ENCODE measurements at regions of chr17 and their contacts with region 1.

Region 1: GRCh38 chr17:81322271-81323082 is 27.4 kb upstream of the SLC38A10 start:
- DNase-seq: peak; percentile 72 to 89
- ATAC-seq: peak; percentile 46 to 83; a peak in 5 of 6 replicates
- H3K4me3 ChIP-seq: no peak overlapping the region
- H3K27ac ChIP-seq: no peak overlapping the region
- H3K4me1 ChIP-seq: no peaks in the 10 kb centered on the region
- CTCF ChIP-seq: peak; percentile 30
- EP300 ChIP-seq: no peak
- POLR2A ChIP-seq: no peak
- RAD21 ChIP-seq: peak in 1 of 2 experiments; percentile 29; a peak in 2 of 5 replicates

Region 2: DNA sequence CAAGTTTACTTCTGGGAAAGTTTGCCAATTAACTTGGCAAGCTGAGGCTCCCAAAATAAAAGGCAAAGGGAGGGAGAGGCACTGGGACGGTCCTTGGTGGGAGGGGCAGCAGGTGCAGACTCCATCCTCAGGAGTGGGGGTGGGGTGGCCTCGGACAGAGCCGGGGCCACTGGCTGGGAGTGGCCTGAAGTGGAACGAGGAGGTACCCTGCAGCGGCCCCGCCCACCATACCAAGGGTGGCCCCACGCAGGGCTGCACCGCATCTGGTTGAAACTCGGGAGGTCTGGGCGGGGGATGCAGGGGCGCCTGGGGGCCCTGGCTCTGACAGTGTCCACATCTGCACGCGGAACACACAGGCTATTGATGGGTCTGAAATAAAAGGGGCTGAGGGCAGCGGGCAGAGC is 15.0 kb after region 1 on chr17:
- CTCF ChIA-PET with region 1: interaction called, 13 read pairs
- POLR2A ChIA-PET with region 1: no interaction called
- DNase-seq: peak; percentile 47 to 76
- ATAC-seq: peak; percentile 27 to 30; a peak in 4 of 6 replicates
- H3K4me3 ChIP-seq: no peak overlapping the region
- H3K27ac ChIP-seq: peak overlapping the region; percentile 23 to 96; a peak in 5 of 6 replicates
- H3K4me1 ChIP-seq: peaks cover 76% of the 10 kb centered on the region
- CTCF ChIP-seq: no peak
- EP300 ChIP-seq: no peak
- POLR2A ChIP-seq: no peak
- RAD21 ChIP-seq: no peak

Region 3: DNA sequence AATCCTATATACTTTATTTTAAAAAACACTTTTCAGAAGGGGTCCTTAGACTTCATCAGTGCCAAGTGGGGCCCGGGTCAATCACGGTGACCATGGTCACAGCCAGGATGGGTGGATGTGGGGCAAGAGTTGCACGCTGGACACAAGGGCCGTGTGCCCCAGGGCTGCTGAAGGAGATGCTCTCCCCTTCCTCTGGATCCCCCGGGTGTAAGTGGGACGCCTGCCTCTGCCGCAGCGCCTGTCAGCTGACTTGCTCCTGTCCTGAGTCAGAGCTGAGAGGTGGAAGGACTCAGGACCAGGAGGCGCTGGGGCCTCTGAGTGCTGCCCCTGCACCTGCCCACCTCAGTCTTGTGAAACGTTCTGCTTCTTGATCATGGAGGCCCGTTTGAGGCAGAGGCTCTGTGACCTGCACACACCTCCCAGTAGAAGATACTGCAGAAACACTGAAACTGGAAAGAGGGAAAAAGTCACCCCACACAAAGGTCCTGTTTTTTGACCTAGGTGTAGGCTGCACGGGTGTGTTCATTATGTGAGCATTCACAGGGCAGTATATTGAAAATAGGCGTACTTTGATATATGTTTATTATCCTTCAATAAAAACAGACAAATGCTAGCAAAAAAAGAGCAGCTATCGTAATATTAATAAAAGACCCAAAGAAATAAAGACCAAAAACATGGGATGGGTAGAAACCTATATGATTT is 31.9 kb after region 1 on chr17:
- CTCF ChIA-PET with region 1: no interaction called
- POLR2A ChIA-PET with region 1: no interaction called
- DNase-seq: no peak
- ATAC-seq: 0 out of 6 replicates have a peak, but pooled peaks of 1 of the 2 experiments have one; percentile 22
- H3K4me3 ChIP-seq: no peak overlapping the region
- H3K27ac ChIP-seq: no peak overlapping the region
- H3K4me1 ChIP-seq: 0 out of 3 replicates have a peak, but pooled peaks cover 4% of the 10 kb centered on the region
- CTCF ChIP-seq: no peak
- EP300 ChIP-seq: no peak
- POLR2A ChIP-seq: no peak
- RAD21 ChIP-seq: no peak